ENCODE measurements at regions of chr2 and their contacts with region 1.

Region 1: DNA sequence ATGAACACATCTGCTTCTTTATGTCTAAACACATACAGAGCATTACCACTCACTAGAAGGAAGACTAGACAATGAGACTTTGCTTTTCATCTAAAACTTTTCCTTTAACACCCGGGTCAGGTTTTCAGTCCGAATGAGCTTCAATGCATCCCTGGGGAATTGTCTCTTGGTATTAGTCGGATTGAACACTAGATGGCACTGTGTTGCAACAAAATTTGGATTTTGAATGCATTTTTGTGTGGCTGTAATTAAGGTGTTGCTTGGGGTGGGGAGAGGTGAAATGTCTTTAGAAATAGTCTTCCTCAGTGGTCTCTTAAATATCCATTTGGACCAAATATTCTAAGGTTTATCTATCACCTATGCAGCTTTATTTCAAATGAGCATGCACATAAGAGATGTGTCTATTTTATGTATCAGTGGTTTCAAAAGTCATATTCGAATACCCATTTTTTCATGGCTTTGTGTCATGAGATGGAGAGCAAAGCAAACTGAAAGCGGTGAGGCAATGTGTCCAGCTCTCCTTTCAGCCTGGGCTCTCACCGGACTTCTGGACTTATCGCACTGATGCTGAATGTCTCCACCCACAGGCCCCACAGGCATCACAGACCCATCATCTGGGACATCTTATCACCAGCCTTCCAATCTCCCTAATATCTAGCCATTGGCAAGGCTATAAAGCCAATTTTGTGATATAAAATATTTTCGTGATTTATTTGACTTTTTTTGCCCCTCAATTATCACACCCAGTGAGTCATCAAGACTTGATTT is 510.3 kb downstream of the RNF144A start:
- DNase-seq: peak; percentile 80
- H3K4me3 ChIP-seq: no peak overlapping the region
- H3K27ac ChIP-seq: no peak overlapping the region
- H3K4me1 ChIP-seq: peaks cover 0 to 4% of the 10 kb centered on the region in 2 experiments; a peak in 2 of 4 replicates
- H3K27me3 ChIP-seq: no peaks in the 10 kb centered on the region
- CTCF ChIP-seq: peak; percentile 90
- EP300 ChIP-seq: peak in 1 of 2 experiments; percentile 11; a peak in 1 of 4 replicates
- RAD21 ChIP-seq: peak; percentile 96

Region 2: GRCh38 chr2:7203055-7203467 is 224.4 kb before region 1 on chr2:
- CTCF ChIA-PET with region 1: interaction called, 34 read pairs
- POLR2A ChIA-PET with region 1: no interaction called
- DNase-seq: peak; percentile 71
- H3K4me3 ChIP-seq: no peak overlapping the region
- H3K27ac ChIP-seq: no peak overlapping the region
- H3K4me1 ChIP-seq: peaks cover 2 to 7% of the 10 kb centered on the region in 2 experiments; a peak in 2 of 4 replicates
- H3K27me3 ChIP-seq: no peaks in the 10 kb centered on the region
- CTCF ChIP-seq: peak; percentile 100
- EP300 ChIP-seq: 0 out of 4 replicates have a peak, but pooled peaks of 1 of the 2 experiments have one; percentile 35
- RAD21 ChIP-seq: peak; percentile 99

Region 3: DNA sequence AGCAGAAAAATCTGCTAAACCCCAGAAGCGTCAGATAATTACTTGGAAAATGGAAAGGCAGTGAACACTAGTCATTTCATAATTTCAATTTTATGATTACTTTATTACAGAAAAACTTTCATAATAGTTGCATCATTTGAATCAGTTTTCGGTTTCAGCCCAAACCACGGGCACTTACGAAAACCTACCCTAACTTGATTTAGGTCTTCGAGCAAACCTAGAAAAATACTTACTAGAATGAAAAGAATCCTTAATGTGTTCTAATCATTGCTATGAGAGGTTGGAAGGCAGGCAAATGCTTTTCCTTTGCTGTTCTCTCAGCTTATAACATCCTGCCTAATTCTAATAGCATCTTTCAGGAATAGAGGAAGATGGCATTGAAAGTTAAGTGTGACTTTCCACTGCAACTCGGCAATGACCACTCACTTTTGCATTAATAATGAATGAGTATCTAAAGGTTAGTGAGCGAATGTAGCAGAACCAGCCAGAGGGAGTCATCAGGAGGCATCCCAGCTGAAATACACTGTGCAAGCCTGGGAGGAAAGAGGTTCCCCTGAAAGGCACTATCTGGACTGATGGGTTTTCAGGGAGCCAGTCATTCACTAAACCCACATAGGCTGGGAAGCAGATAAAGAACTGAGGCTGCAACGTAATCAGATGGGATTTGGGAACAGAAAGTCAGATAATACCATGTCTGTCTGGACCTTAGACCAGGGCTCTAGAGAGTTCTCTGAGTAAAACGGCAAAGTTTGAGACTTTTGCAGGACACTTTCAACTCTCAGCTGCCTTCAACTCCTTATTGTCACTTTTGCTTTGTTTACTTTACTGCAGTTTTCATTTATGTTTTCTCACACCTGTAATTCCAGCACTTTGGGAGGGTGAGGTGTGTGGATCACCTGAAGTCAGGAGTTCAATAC is 10.5 kb after region 1 on chr2:
- CTCF ChIA-PET with region 1: interaction called, 41 read pairs
- POLR2A ChIA-PET with region 1: no interaction called
- DNase-seq: no peak
- H3K4me3 ChIP-seq: no peak overlapping the region
- H3K27ac ChIP-seq: no peak overlapping the region
- H3K4me1 ChIP-seq: no peaks in the 10 kb centered on the region
- H3K27me3 ChIP-seq: no peaks in the 10 kb centered on the region
- CTCF ChIP-seq: no peak
- EP300 ChIP-seq: no peak
- RAD21 ChIP-seq: no peak

Region 4: DNA sequence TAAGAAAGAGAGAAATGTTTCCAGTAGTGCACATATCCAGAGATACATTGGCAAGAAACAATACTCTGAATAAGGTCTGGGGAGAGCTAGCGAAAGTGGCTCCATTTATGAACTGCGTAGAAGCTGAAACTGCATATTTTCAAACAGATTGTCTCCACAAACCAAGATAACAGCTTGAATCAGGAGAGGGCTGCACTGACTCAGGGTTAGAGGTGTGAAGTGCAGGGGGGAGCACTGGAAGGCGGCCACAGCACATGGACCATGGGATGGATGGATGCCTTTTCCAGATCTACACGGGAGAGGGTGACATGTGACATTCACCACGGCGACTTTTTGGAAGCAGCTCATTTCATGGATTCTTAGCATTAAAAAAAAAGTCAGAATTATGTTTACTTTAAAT is 219.2 kb after region 1 on chr2:
- CTCF ChIA-PET with region 1: interaction called, 12 read pairs
- POLR2A ChIA-PET with region 1: no interaction called
- DNase-seq: peak; percentile 17
- H3K4me3 ChIP-seq: no peak overlapping the region
- H3K27ac ChIP-seq: no peak overlapping the region; a peak in 1 of 4 replicates
- H3K4me1 ChIP-seq: peaks cover 0 to 8% of the 10 kb centered on the region in 2 experiments; a peak in 1 of 4 replicates
- H3K27me3 ChIP-seq: no peaks in the 10 kb centered on the region
- CTCF ChIP-seq: no peak
- EP300 ChIP-seq: no peak
- RAD21 ChIP-seq: no peak

Region 5: DNA sequence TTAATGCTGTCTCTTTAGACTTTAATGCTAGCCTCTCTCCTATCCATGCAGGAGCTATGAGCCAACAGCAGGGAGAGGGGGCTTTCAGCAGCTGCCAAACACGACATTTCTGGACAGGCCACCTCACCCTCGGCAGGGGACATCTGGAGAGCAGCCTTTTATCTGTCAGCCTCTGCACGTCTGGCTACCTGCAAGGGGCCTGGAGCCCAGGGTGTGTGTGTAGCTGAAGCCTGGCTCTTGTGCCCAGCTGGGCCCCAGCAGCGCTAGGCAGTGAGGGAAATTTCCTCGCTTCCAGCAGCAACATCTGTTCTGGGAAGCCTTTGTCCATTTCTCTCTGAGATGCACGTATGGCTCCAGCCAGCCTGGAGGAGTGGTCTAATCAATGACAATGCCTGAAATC is 525.7 kb after region 1 on chr2:
- CTCF ChIA-PET with region 1: interaction called, 11 read pairs
- POLR2A ChIA-PET with region 1: no interaction called
- DNase-seq: peak; percentile 89
- H3K4me3 ChIP-seq: no peak overlapping the region
- H3K27ac ChIP-seq: peak overlapping the region in 1 of 2 experiments; percentile 91; a peak in 2 of 4 replicates
- H3K4me1 ChIP-seq: peaks cover 0 to 35% of the 10 kb centered on the region in 2 experiments; a peak in 2 of 4 replicates
- H3K27me3 ChIP-seq: no peaks in the 10 kb centered on the region
- CTCF ChIP-seq: no peak
- EP300 ChIP-seq: peak in 1 of 2 experiments; percentile 83; a peak in 1 of 4 replicates
- RAD21 ChIP-seq: no peak

Region 6: GRCh38 chr2:8681786-8682692 is 1254.6 kb after region 1 on chr2 and contains the start of gene ID2:
- CTCF ChIA-PET with region 1: interaction called, 25 read pairs
- POLR2A ChIA-PET with region 1: interaction called, 6 read pairs
- DNase-seq: peak; percentile 98
- H3K4me3 ChIP-seq: peak within 1 kb of the TSS; percentile 98 to 100
- H3K27ac ChIP-seq: peak within 1 kb of the TSS; percentile 97 to 99
- H3K4me1 ChIP-seq: peaks cover 12 to 48% of the 10 kb centered on the region in 2 experiments
- H3K27me3 ChIP-seq: no peaks in the 10 kb centered on the region
- CTCF ChIP-seq: no peak
- EP300 ChIP-seq: peak in 1 of 2 experiments; percentile 33; a peak in 1 of 4 replicates
- RAD21 ChIP-seq: peak; percentile 27; the same call in 1 of the 2 replicates
- polyA plus RNA-seq, gene ID2: 385 and 459 TPM in 2 replicates